Panc1 (cell line): ENCODE measurements at regions of chr22 and their contacts with region 1.

Region 1: DNA sequence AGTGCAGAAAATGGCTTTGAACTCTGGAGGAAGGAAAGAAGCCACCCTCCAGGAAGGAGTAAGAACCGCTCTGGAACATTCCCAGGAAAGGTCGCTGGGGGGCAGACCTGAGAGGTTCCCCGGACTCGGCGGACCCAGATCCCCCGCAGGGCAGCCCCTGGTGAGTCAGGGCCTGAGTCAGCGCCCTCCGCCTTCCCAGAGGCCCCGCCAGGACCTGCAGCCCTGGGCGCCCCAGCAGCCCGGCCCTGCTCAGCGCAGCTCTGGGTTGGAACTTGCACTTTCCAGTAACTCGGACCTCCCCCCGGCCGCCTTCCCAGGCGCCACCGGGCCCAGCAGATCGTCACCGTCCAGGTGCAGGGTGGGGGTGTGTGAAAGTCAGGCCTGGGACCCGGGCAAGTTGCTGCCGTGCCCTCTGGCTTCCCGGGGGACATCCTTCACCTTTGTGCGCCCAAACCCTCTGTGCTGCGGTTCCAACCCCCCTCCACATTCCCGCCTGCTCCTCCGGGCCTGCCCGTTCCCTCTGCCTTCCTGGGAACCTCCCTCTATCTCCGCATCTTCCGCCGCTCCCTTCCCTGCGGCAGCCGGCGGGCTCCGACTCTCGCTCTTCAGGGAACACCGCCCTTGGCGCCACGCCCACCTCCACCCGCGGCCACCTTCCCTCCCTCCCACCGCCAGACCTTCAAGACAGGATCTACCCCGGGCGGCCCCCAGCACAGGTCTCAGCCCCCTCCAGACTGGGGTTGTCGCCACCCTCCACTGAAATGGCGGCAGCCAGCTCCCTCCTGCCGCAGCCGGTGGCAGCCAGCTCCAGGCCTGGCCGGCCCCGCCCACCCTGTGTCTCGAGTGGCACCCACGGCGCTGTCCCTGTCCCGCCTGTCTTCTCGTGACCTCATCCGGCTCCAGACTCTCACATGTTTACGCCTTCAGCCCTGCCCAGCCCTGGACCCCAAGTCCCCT is 36.8 kb upstream of the WNT7B start:
- DNase-seq: peak; percentile 72
- ATAC-seq: peak; percentile 94
- H3K4me3 ChIP-seq: peak overlapping the region; percentile 42 to 55
- H3K27ac ChIP-seq: peak overlapping the region; percentile 94
- H3K4me1 ChIP-seq: peaks cover 39% of the 10 kb centered on the region
- H3K27me3 ChIP-seq: no peaks in the 10 kb centered on the region
- CTCF ChIP-seq: peak; percentile 83

Region 2: DNA sequence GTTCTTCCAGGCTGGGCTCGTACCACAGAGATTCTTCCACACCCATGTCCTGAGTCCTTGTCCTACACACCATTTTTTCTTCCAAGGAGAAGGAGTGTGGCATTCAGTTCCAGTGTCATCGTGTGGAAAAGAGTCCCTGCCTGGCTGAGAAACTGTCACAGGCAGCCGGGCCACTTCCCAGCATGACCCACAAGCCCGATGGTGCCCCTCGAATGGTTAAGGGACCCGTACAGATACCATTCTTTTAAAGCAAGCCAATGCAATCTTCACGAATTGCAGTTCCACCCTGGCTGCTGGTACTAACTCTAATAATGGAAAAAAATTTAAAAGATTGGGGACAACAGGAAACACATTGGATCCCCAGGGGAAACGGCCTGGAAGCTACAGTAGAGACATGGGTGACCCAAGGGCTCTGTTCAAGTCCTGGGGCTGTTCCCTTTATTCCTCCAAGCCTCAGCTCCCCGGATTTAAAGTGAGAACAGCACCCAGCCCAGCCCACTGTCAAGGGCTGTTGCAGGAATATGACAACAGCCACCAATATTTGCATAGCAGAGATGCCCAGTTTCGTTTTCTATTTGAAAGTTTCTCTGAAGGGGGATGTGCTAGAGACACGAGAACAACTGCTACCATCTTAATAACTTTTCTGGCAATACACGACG is 44.2 kb after region 1 on chr22:
- CTCF ChIA-PET with region 1: interaction called, 3 read pairs
- POLR2A ChIA-PET with region 1: no interaction called
- in situ Hi-C with region 1: no loop called
- intact Hi-C with region 1: loop called (anchors 5 kb)
- DNase-seq: no peak
- ATAC-seq: peak; percentile 8; the same call in 1 of the 2 replicates
- H3K4me3 ChIP-seq: peak overlapping the region; percentile 24 to 58
- H3K27ac ChIP-seq: peak overlapping the region; percentile 100
- H3K4me1 ChIP-seq: peaks cover 61% of the 10 kb centered on the region
- H3K27me3 ChIP-seq: no peaks in the 10 kb centered on the region
- CTCF ChIP-seq: no peak

Region 3: GRCh38 chr22:46303347-46303965 is 289.7 kb after region 1 on chr22:
- CTCF ChIA-PET with region 1: no interaction called
- POLR2A ChIA-PET with region 1: no interaction called
- in situ Hi-C with region 1: loop called (anchors 25 kb)
- intact Hi-C with region 1: no loop called
- DNase-seq: no peak
- ATAC-seq: no peak
- H3K4me3 ChIP-seq: no peak overlapping the region
- H3K27ac ChIP-seq: no peak overlapping the region
- H3K4me1 ChIP-seq: no peaks in the 10 kb centered on the region
- H3K27me3 ChIP-seq: no peaks in the 10 kb centered on the region
- CTCF ChIP-seq: no peak